ENCODE measurements at regions of chr22 and their contacts with region 1.

Region 1: GRCh38 chr22:33018232-33018864 is 39.8 kb downstream of the SYN3 start:
- DNase-seq: peak; percentile 50 to 54
- H3K4me3 ChIP-seq: no peak overlapping the region
- H3K27ac ChIP-seq: no peak overlapping the region
- H3K4me1 ChIP-seq: no peaks in the 10 kb centered on the region
- H3K27me3 ChIP-seq: no peaks in the 10 kb centered on the region
- CTCF ChIP-seq: peak; percentile 61 to 88 (median 67)
- POLR2A ChIP-seq: no peak

Region 2: GRCh38 chr22:33049119-33049729 is 30.9 kb after region 1 on chr22:
- intact Hi-C with region 1: loop called (anchors 2 kb)
- DNase-seq: peak; percentile 74 to 78
- H3K4me3 ChIP-seq: no peak overlapping the region
- H3K27ac ChIP-seq: no peak overlapping the region
- H3K4me1 ChIP-seq: no peaks in the 10 kb centered on the region
- H3K27me3 ChIP-seq: peaks cover 6% of the 10 kb centered on the region
- CTCF ChIP-seq: peak; percentile 53 to 93 (median 68)
- POLR2A ChIP-seq: no peak